ENCODE measurements at regions of chr7 and their contacts with region 1.

Region 1: GRCh38 chr7:16564909-16565426 is 38.3 kb downstream of the LRRC72 start:
- DNase-seq: peak; percentile 9
- H3K4me3 ChIP-seq: no peak overlapping the region
- CTCF ChIP-seq: peak; percentile 54

Region 2: GRCh38 chr7:16071246-16071857 is 493.6 kb before region 1 on chr7:
- CTCF ChIA-PET with region 1: interaction called, 12 read pairs
- POLR2A ChIA-PET with region 1: no interaction called
- DNase-seq: no peak
- H3K4me3 ChIP-seq: no peak overlapping the region
- CTCF ChIP-seq: peak; percentile 49

Region 3: DNA sequence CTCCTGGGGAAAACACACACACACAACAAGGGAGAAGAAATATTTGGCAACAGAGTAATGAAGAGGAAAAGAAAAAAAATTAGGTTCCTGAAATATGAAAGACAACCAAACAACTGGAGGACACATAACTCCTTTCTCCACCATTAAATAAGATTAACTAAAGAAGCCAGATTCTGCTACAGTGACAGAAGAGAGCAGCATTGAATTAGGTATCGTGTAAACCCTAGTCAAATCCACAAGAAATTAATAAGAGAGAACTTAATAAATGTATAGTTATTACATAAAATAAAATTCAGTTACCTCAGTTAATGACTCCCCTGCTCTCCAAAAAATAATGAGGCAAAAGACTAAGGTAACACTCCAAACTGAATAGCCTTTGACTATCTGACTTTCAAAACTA is 450.3 kb before region 1 on chr7:
- CTCF ChIA-PET with region 1: interaction called, 50 read pairs
- POLR2A ChIA-PET with region 1: no interaction called
- DNase-seq: no peak
- H3K4me3 ChIP-seq: no peak overlapping the region
- CTCF ChIP-seq: peak; percentile 14

Region 4: DNA sequence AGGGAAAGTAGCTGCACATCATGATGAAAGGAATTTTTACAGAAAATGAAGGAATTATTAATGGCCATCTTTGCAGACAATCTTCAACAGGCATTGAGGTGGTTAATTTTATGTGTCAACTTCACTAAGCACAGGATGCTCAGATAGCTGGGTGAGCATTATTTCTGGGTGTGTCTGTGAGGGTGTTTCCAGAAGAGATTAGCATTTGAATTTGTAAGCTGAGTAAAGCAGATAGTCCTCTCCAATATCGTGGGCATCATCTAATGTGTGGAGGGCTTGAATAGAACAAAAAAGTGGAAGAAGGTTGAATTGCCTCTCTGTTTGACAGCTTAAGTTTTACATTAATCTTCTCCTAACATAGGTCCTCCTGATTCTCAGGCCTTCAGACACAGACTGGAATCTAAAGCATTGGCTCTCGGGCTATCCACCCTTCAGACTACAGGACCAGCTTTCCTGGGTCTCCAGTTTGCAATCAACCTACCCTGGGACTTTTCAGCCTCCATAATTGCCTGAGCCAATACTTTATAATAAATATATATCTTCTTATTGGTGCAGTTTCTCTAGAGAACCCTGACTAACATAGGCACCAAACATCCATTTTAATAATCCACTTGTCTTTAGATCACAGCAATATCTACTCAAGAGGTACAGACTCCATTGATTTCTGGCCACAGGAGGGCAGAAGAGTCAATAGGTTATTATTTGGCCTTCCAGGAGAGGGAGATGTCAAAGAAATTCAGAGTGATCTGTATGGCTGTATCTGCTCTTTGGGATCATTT is 133.1 kb before region 1 on chr7:
- CTCF ChIA-PET with region 1: interaction called, 36 read pairs
- POLR2A ChIA-PET with region 1: no interaction called
- DNase-seq: no peak
- H3K4me3 ChIP-seq: no peak overlapping the region
- CTCF ChIP-seq: peak; percentile 28

Region 5: GRCh38 chr7:16587790-16588189 is 22.8 kb after region 1 on chr7:
- CTCF ChIA-PET with region 1: interaction called, 54 read pairs
- POLR2A ChIA-PET with region 1: no interaction called
- DNase-seq: no peak
- H3K4me3 ChIP-seq: no peak overlapping the region
- CTCF ChIP-seq: no peak

Region 6: GRCh38 chr7:17009007-17009719 is 444.2 kb after region 1 on chr7:
- CTCF ChIA-PET with region 1: no interaction called
- POLR2A ChIA-PET with region 1: no interaction called
- DNase-seq: no peak
- H3K4me3 ChIP-seq: no peak overlapping the region
- CTCF ChIP-seq: no peak

Measured in AG04449 (cell line).